Pancreas (tissue), 10 donors: ENCODE measurements at regions of chr6 and their contacts with region 1.

Region 1: DNA sequence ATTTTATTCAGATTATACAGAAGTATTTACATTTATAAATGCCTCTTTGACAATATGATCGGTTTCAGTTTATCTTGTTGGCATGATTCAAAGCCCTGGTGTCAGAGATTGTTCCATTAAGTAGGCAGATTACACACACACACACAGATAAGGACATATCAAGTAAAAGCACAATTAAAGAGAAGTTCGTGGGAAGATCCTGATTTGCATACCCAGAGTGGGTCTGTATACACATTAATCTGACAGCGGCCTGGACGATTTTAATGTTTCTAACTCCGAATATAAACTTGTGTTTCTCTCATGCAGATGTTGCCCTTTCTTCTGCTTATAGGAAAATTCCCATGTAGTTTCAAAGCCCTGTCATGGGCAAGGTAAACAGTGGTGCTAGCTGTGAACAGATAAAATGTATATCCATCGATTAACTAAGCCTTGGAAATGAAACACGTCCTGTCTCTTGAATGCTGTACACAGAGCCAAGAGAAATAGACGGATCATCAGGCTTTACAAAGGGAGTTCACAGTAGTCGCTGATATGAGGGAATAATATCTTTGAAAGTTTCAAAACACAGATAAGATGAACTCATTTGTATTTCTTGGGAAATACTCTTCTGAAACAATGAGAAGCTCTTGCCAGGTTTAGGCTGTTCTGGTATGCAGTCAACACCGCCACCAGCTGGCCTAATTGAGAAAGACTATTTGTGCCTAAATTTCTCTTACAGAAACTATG is 108.2 kb upstream of the GMDS start:
- DNase-seq: peak in 5 of 6 donors; percentile 52 to 77 (median 62)
- ATAC-seq: peak; percentile 80 to 96 (median 92)
- H3K4me3 ChIP-seq: no peak overlapping the region
- H3K27ac ChIP-seq: peak overlapping the region in 2 of 4 donors; percentile 19 to 39
- H3K4me1 ChIP-seq: peaks cover 6 to 19% (median 7%) of the 10 kb centered on the region in 3 donors
- H3K27me3 ChIP-seq: no peaks in the 10 kb centered on the region
- CTCF ChIP-seq: peak; percentile 34 to 60 (median 49)

Region 2: GRCh38 chr6:1604158-1605030 is 749.2 kb before region 1 on chr6:
- intact Hi-C with region 1: loop called in 2 of 3 experiments (anchors 5 to 10 kb)
- DNase-seq: peak; percentile 32 to 97 (median 78)
- ATAC-seq: peak; percentile 91 to 93 (median 92)
- H3K4me3 ChIP-seq: peak overlapping the region; percentile 26 to 68 (median 38)
- H3K27ac ChIP-seq: no peak overlapping the region
- H3K4me1 ChIP-seq: peaks cover 0 to 11% (median 6%) of the 10 kb centered on the region in 3 donors
- H3K27me3 ChIP-seq: peaks cover 0 to 39% (median 9%) of the 10 kb centered on the region in 4 donors
- CTCF ChIP-seq: peak; percentile 93 to 99 (median 95)

Region 3: DNA sequence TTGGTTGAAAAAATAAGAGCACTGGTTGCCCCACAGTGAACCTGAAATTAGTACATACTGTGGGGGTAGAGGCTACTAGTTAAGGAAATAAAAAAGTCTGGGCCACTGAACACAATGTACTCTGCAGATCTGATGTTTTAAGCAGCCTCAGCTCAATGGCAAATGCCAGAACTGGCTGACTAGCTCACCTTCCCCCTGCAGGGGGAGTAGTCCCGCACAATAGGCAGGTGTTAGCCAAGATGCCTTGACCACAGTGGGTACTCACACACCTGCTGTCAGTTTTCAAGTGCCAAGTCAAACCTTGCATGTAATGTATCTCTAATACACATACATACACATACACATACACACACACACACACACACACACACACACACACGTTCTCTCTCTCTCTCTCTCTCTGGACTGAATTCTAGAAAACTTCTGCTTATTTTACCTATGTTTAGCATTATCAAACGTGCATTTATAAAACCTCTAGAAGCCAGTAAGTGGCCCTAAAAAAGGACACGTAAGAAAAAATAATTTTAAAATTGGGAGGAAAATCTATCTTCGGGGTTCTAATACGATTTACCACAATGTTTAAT is 144.3 kb before region 1 on chr6:
- intact Hi-C with region 1: loop called in 1 of 3 experiments (anchors 10 kb)
- DNase-seq: peak; percentile 72 to 88 (median 78)
- ATAC-seq: peak; percentile 97 to 100 (median 99)
- H3K4me3 ChIP-seq: no peak overlapping the region
- H3K27ac ChIP-seq: no peak overlapping the region
- H3K4me1 ChIP-seq: peaks cover 0 to 4% (median 2%) of the 10 kb centered on the region in 3 donors
- H3K27me3 ChIP-seq: no peaks in the 10 kb centered on the region
- CTCF ChIP-seq: peak; percentile 39 to 53 (median 40)